PC-3 (cell line): ENCODE measurements at regions of chr6 and their contacts with region 1.

Region 1: GRCh38 chr6:137202078-137202477 is 17.1 kb downstream of the IFNGR1 start:
- DNase-seq: no peak
- ATAC-seq: 0 out of 2 replicates have a peak, but pooled peaks have one; percentile 45
- H3K4me3 ChIP-seq: no peak overlapping the region
- H3K27ac ChIP-seq: no peak overlapping the region
- H3K4me1 ChIP-seq: no peaks in the 10 kb centered on the region
- H3K27me3 ChIP-seq: no peaks in the 10 kb centered on the region
- CTCF ChIP-seq: peak; percentile 35; the same call in 1 of the 2 replicates

Region 2: DNA sequence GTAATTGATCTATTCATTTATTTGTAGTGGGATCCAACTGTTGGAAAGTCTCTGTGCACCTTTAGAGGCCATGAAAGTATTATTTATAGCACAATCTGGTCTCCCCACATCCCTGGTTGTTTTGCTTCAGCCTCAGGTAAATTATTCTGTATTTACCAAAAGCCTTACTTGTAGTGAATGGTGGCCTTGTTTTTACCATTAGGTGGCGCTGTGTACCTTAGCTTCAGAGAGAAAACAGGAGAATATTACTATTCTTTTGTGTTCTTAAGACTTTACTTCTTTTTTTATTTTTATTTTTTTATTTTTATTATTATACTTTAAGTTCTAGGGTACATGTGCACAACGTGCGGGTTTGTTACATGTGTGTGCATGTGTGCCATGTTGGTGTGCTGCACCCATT is 356.0 kb before region 1 on chr6:
- CTCF ChIA-PET with region 1: no interaction called
- POLR2A ChIA-PET with region 1: no interaction called
- intact Hi-C with region 1: loop called (anchors 5 kb)
- DNase-seq: peak; percentile 64
- ATAC-seq: no peak
- H3K4me3 ChIP-seq: no peak overlapping the region
- H3K27ac ChIP-seq: no peak overlapping the region
- H3K4me1 ChIP-seq: no peaks in the 10 kb centered on the region
- H3K27me3 ChIP-seq: no peaks in the 10 kb centered on the region
- CTCF ChIP-seq: peak; percentile 62

Region 3: GRCh38 chr6:137094411-137095008 is 107.6 kb before region 1 on chr6:
- CTCF ChIA-PET with region 1: no interaction called
- POLR2A ChIA-PET with region 1: no interaction called
- intact Hi-C with region 1: loop called (anchors 1 kb)
- DNase-seq: peak; percentile 83
- ATAC-seq: peak; percentile 81
- H3K4me3 ChIP-seq: no peak overlapping the region
- H3K27ac ChIP-seq: no peak overlapping the region
- H3K4me1 ChIP-seq: 0 out of 2 replicates have a peak, but pooled peaks cover 4% of the 10 kb centered on the region
- H3K27me3 ChIP-seq: no peaks in the 10 kb centered on the region
- CTCF ChIP-seq: peak; percentile 77

Region 4: GRCh38 chr6:137402231-137402630 is 200.2 kb after region 1 on chr6:
- CTCF ChIA-PET with region 1: no interaction called
- POLR2A ChIA-PET with region 1: no interaction called
- intact Hi-C with region 1: no loop called
- DNase-seq: no peak
- ATAC-seq: no peak
- H3K4me3 ChIP-seq: no peak overlapping the region
- H3K27ac ChIP-seq: no peak overlapping the region
- H3K4me1 ChIP-seq: no peaks in the 10 kb centered on the region
- H3K27me3 ChIP-seq: peaks cover 13% of the 10 kb centered on the region; the same call in 1 of the 2 replicates
- CTCF ChIP-seq: no peak